Activated CD4-positive, alpha-beta T cell treated with anti-CD3 and anti-CD28 coated beads, Interleukin-2, amount 10 ng/mL, durations not matched to agents 24 days and 14 days (primary cell): ENCODE measurements at regions of chr2 and their contacts with region 1.

Region 1: GRCh38 chr2:230160112-230160660 is 59.6 kb downstream of the SP110 start:
- DNase-seq: peak; percentile 87
- H3K4me3 Mint-ChIP-seq: no peak overlapping the region
- H3K27ac Mint-ChIP-seq: no peak overlapping the region
- H3K4me1 Mint-ChIP-seq: peaks cover 11% of the 10 kb centered on the region
- H3K27me3 Mint-ChIP-seq: peaks cover 2% of the 10 kb centered on the region

Region 2: DNA sequence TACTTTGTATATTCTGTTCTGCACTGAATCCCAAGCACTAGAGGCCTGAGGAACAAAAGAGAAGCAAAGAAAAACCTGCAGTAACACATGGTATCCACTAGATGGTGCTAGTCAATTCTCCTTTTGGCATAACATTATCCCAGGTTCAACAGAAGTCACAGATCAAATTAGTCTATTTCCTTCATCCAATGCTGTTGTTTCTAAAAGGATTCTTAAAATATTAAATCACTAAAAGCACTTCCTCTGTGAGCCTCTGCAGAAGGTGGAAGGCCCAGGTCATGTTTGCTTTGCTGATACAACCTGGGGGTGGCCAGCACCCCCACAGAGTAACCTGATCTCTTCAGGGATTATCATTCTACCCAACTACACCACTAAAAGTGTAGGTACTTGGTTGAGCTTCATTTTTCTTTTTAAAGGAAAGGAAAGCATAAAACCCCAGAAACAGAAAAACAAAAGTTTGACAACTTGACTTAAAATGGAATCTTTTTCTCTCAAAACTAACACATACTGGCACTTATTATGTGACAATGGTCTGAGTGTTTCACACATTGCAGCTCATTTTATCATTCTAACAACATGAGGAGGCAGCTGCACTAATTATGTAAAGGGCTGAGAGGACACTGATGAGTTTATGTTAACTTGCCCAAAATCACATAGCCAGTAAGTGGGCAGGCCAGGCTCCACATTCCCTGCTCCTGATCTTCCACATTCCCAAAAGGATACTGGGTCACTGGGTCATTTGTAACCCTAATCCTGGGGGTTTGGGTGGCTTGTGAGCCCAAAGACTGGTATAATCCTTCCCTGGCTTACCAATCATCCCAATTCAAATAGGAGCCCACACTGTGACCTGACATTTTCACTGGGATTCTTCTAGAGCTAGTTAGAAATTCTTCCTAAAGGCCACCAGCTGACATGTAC is 379.1 kb before region 1 on chr2:
- intact Hi-C with region 1: loop called (anchors 10 kb)
- DNase-seq: no peak
- H3K4me3 Mint-ChIP-seq: no peak overlapping the region
- H3K27ac Mint-ChIP-seq: no peak overlapping the region
- H3K4me1 Mint-ChIP-seq: peaks cover 11% of the 10 kb centered on the region
- H3K27me3 Mint-ChIP-seq: no peaks in the 10 kb centered on the region

Region 3: GRCh38 chr2:230007931-230008707 is 152.1 kb before region 1 on chr2:
- intact Hi-C with region 1: loop called (anchors 1 kb)
- DNase-seq: peak; percentile 94
- H3K4me3 Mint-ChIP-seq: no peak overlapping the region
- H3K27ac Mint-ChIP-seq: no peak overlapping the region
- H3K4me1 Mint-ChIP-seq: peaks cover 2% of the 10 kb centered on the region
- H3K27me3 Mint-ChIP-seq: no peaks in the 10 kb centered on the region